ENCODE measurements at regions of chr5 and their contacts with region 1.

Region 1: DNA sequence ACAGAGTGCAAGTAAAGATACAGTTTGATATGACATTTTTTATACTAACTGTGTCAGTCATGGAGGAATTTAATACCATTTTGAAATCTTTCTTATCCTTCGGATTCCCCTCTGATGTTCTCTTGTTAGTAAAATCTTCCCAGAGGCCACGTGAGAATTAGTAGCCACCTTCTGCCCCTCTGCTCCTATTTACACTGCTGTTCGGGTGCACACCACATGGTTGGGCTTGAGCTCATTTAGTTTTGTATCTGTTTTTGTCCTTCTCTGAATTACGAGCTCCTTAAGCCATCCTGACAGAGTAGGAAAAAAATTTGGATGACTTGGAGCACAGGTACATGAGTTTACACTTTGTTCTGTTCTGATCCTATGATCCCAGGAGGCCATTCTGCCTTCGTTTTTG is 109.7 kb downstream of the SV2C start:
- DNase-seq: no peak
- ATAC-seq: no peak
- H3K4me3 ChIP-seq: no peak overlapping the region
- H3K27ac ChIP-seq: no peak overlapping the region
- H3K4me1 ChIP-seq: no peaks in the 10 kb centered on the region
- H3K27me3 ChIP-seq: no peaks in the 10 kb centered on the region
- CTCF ChIP-seq: no peak
- POLR2A ChIP-seq: no peak
- RAD21 ChIP-seq: no peak

Region 2: DNA sequence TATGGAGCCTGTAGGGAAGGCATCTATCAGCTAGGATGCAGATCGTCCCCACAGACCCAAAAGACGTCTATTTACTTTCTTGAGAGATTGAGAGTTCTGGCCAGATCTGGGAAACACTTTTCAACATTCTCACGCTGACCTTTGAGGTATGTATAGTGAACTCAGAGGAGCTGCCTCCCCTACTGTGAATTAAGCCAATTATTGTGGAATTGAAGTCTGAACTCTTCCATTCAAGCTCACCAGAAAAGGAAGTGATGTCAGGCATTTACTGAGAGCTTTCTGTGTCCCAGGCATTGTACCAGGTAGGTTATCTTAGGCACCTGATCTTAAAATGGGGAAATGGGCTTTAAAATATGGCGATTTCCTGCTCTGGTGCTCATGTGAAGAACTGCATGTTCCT is 26.8 kb after region 1 on chr5:
- CTCF ChIA-PET with region 1: no interaction called
- POLR2A ChIA-PET with region 1: interaction called, 10 read pairs
- dilution Hi-C with region 1: no loop called
- in situ Hi-C with region 1: no loop called
- intact Hi-C with region 1: no loop called
- DNase-seq: no peak
- ATAC-seq: no peak
- H3K4me3 ChIP-seq: no peak overlapping the region
- H3K27ac ChIP-seq: no peak overlapping the region
- H3K4me1 ChIP-seq: no peaks in the 10 kb centered on the region
- H3K27me3 ChIP-seq: no peaks in the 10 kb centered on the region
- CTCF ChIP-seq: no peak
- POLR2A ChIP-seq: no peak
- RAD21 ChIP-seq: no peak

Measured in IMR-90 (cell line).